ENCODE measurements at regions of chr7 and their contacts with region 1.

Region 1: GRCh38 chr7:128135515-128136214 is 104.4 kb upstream of the LRRC4 start:
- DNase-seq: peak; percentile 39
- H3K4me3 ChIP-seq: peak overlapping the region; percentile 73
- H3K27ac ChIP-seq: no peak overlapping the region
- H3K4me1 ChIP-seq: peaks cover 21% of the 10 kb centered on the region
- H3K27me3 ChIP-seq: peaks cover 91% of the 10 kb centered on the region
- CTCF ChIP-seq: peak; percentile 98

Region 2: DNA sequence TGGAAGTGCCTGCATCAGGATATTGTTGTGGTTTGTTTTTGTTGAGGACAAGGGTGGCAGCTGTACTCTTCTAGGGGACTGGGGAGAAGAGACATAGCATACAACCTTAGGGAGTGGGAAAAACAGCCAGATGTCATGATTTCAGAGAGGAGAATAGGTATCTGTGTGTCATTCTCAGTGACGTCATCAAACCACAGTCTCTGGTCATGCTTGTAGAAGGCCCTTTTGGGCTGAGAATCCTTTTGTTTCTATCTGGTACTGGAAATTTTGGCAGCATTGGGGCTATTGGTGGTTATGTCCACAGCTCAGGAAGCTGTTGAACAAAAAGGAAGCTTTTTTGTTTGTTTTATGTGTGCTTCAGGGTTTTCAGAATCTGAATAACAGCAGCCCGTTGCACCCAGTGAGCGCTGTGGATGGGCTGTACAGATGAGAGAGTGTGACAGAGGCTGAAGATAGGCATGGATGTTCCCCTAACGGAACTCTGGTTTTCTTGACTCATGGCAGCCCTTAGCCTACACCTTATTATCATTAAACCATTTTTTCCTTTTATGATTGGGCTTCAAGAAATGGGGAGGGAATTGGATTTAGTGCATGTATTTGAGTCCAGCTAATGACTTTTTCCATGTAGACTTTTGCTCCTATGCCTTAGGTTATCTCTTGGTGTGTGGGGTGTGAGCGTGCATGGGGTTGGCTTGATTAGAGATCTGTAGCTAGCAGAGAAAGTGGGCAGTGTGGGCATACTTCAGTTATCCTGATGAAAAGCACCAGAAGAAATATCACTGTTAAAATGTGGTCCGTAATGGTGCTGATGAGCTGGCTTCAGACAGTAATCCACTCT is 417.9 kb before region 1 on chr7:
- intact Hi-C with region 1: loop called (anchors 5 kb)
- DNase-seq: no peak
- H3K4me3 ChIP-seq: no peak overlapping the region
- H3K27ac ChIP-seq: no peak overlapping the region
- H3K4me1 ChIP-seq: no peaks in the 10 kb centered on the region
- H3K27me3 ChIP-seq: no peaks in the 10 kb centered on the region
- CTCF ChIP-seq: no peak

Region 3: GRCh38 chr7:127968547-127968946 is 167.1 kb before region 1 on chr7:
- intact Hi-C with region 1: no loop called
- DNase-seq: no peak
- H3K4me3 ChIP-seq: no peak overlapping the region
- H3K27ac ChIP-seq: no peak overlapping the region
- H3K4me1 ChIP-seq: peaks cover 5% of the 10 kb centered on the region
- H3K27me3 ChIP-seq: no peaks in the 10 kb centered on the region
- CTCF ChIP-seq: no peak